CD8-positive, alpha-beta memory T cell (primary cell): ENCODE measurements at regions of chr1 and their contacts with region 1.

Region 1: GRCh38 chr1:168439456-168440375 is 104.1 kb downstream of the XCL2 start:
- DNase-seq: peak; percentile 67 to 89 (median 80)
- H3K4me3 ChIP-seq: peak overlapping the region; percentile 48
- H3K4me3 Mint-ChIP-seq: peak overlapping the region; percentile 44 to 93 (median 85)
- H3K27ac ChIP-seq: no peak overlapping the region
- H3K27ac Mint-ChIP-seq: peak overlapping the region; percentile 56 to 93 (median 88)
- H3K4me1 ChIP-seq: peaks cover 45% of the 10 kb centered on the region
- H3K4me1 Mint-ChIP-seq: peaks cover 58 to 65% (median 60%) of the 10 kb centered on the region in 3 donors
- H3K27me3 ChIP-seq: no peaks in the 10 kb centered on the region
- H3K27me3 Mint-ChIP-seq: peaks cover 0 to 1% of the 10 kb centered on the region in 2 donors

Region 2: GRCh38 chr1:168365719-168366479 is 73.8 kb before region 1 on chr1:
- CTCF ChIA-PET with region 1: interaction called, 11 read pairs
- POLR2A ChIA-PET with region 1: no interaction called
- DNase-seq: no peak
- H3K4me3 ChIP-seq: no peak overlapping the region
- H3K4me3 Mint-ChIP-seq: no peak overlapping the region
- H3K27ac ChIP-seq: no peak overlapping the region
- H3K27ac Mint-ChIP-seq: peak overlapping the region in 1 of 8 donors; percentile 7
- H3K4me1 ChIP-seq: peaks cover 27% of the 10 kb centered on the region
- H3K4me1 Mint-ChIP-seq: peaks cover 40 to 47% (median 45%) of the 10 kb centered on the region in 3 donors
- H3K27me3 ChIP-seq: no peaks in the 10 kb centered on the region
- H3K27me3 Mint-ChIP-seq: no peaks in the 10 kb centered on the region

Region 3: DNA sequence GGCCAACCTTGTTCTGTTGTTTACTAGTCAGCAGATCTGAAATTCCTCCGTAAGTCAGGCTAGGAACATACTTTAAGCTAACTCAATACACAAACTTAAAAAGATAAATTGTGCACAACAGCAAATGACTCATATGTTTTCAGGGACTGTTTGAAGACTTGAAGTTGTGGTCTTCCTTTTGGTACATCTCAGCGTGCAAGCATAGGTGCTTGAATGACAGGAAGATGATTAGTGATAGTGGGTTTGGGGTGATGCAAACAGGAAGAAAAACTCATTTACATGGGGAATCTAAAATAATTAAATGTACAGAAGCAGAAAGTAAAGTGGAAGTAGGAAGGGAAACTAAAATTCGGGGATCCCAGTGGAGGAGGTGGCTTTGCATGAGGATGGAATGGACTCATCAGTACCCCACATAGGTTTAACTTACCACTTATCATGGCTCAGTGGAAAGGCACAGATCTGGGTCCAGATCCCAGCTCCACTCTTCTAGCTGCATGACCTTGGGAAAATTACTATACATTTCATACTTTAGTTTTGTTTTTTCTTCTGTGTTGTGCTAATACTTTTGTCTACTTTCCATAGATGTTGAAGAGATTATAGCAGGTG is 18.2 kb before region 1 on chr1:
- CTCF ChIA-PET with region 1: interaction called, 18 read pairs
- POLR2A ChIA-PET with region 1: interaction called, 3 read pairs
- DNase-seq: peak in 3 of 5 donors; percentile 14 to 61 (median 59)
- H3K4me3 ChIP-seq: no peak overlapping the region
- H3K4me3 Mint-ChIP-seq: peak overlapping the region; percentile 2 to 71 (median 54)
- H3K27ac ChIP-seq: peak overlapping the region; percentile 8
- H3K27ac Mint-ChIP-seq: peak overlapping the region in 7 of 8 donors; percentile 14 to 90 (median 79)
- H3K4me1 ChIP-seq: peaks cover 28% of the 10 kb centered on the region
- H3K4me1 Mint-ChIP-seq: peaks cover 41 to 49% (median 42%) of the 10 kb centered on the region in 3 donors
- H3K27me3 ChIP-seq: no peaks in the 10 kb centered on the region
- H3K27me3 Mint-ChIP-seq: no peaks in the 10 kb centered on the region

Region 4: GRCh38 chr1:168427051-168427450 is 12.7 kb before region 1 on chr1:
- CTCF ChIA-PET with region 1: interaction called, 18 read pairs
- POLR2A ChIA-PET with region 1: interaction called, 3 read pairs
- DNase-seq: no peak
- H3K4me3 ChIP-seq: no peak overlapping the region
- H3K4me3 Mint-ChIP-seq: no peak overlapping the region
- H3K27ac ChIP-seq: no peak overlapping the region
- H3K27ac Mint-ChIP-seq: no peak overlapping the region
- H3K4me1 ChIP-seq: peaks cover 7% of the 10 kb centered on the region
- H3K4me1 Mint-ChIP-seq: peaks cover 15 to 21% (median 20%) of the 10 kb centered on the region in 3 donors
- H3K27me3 ChIP-seq: no peaks in the 10 kb centered on the region
- H3K27me3 Mint-ChIP-seq: no peaks in the 10 kb centered on the region

Region 5: GRCh38 chr1:168488138-168488537 is 48.4 kb after region 1 on chr1:
- CTCF ChIA-PET with region 1: no interaction called
- POLR2A ChIA-PET with region 1: no interaction called
- DNase-seq: no peak
- H3K4me3 ChIP-seq: no peak overlapping the region
- H3K4me3 Mint-ChIP-seq: no peak overlapping the region
- H3K27ac ChIP-seq: no peak overlapping the region
- H3K27ac Mint-ChIP-seq: peak overlapping the region in 2 of 8 donors; percentile 46 to 49
- H3K4me1 ChIP-seq: peaks cover 19% of the 10 kb centered on the region
- H3K4me1 Mint-ChIP-seq: peaks cover 51 to 60% (median 53%) of the 10 kb centered on the region in 3 donors
- H3K27me3 ChIP-seq: no peaks in the 10 kb centered on the region
- H3K27me3 Mint-ChIP-seq: peaks cover 0 to 1% of the 10 kb centered on the region in 2 donors

Region 6: GRCh38 chr1:168585191-168585590 is 145.5 kb after region 1 on chr1:
- CTCF ChIA-PET with region 1: interaction called, 18 read pairs
- POLR2A ChIA-PET with region 1: no interaction called
- DNase-seq: no peak
- H3K4me3 ChIP-seq: no peak overlapping the region
- H3K4me3 Mint-ChIP-seq: no peak overlapping the region
- H3K27ac ChIP-seq: no peak overlapping the region
- H3K27ac Mint-ChIP-seq: peak overlapping the region in 1 of 8 donors; percentile 43
- H3K4me1 ChIP-seq: no peaks in the 10 kb centered on the region
- H3K4me1 Mint-ChIP-seq: peaks cover 0 to 6% (median 4%) of the 10 kb centered on the region in 3 donors
- H3K27me3 ChIP-seq: no peaks in the 10 kb centered on the region
- H3K27me3 Mint-ChIP-seq: no peaks in the 10 kb centered on the region

Region 7: DNA sequence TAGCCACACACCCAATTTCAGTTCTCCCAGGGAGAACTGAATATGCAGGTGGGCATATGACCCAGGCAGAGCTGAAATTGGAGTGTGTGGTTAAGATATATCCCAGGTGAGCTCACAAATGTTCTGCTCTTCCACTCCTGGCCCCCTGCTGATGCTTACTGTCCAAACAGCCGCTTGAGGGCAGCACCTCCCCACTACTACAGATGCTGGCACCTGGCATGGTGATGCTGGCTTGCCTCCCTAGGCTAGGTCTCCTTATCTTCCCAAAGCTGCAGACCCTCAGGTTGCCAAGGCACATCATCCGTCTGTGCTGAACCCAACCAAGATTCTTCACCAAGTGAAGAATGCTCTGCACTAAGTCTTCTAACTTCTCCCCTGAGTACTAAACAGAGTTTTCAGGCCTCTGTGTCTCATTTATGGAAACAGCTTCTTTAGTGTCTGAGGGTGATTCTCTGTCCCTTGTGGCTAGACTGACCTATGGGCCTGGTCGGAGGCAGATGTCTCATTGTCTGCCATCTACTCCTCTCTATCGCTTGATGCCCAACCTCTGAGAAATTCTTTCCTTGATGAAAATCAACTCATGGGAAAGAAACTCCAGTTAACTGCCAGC is 163.9 kb after region 1 on chr1:
- CTCF ChIA-PET with region 1: interaction called, 46 read pairs
- POLR2A ChIA-PET with region 1: interaction called, 4 read pairs
- DNase-seq: peak; percentile 53 to 77 (median 54)
- H3K4me3 ChIP-seq: no peak overlapping the region
- H3K4me3 Mint-ChIP-seq: no peak overlapping the region
- H3K27ac ChIP-seq: no peak overlapping the region
- H3K27ac Mint-ChIP-seq: peak overlapping the region in 1 of 8 donors; percentile 22
- H3K4me1 ChIP-seq: no peaks in the 10 kb centered on the region
- H3K4me1 Mint-ChIP-seq: peaks cover 0 to 4% (median 0%) of the 10 kb centered on the region in 3 donors
- H3K27me3 ChIP-seq: no peaks in the 10 kb centered on the region
- H3K27me3 Mint-ChIP-seq: peaks cover 0 to 3% of the 10 kb centered on the region in 2 donors

Region 8: DNA sequence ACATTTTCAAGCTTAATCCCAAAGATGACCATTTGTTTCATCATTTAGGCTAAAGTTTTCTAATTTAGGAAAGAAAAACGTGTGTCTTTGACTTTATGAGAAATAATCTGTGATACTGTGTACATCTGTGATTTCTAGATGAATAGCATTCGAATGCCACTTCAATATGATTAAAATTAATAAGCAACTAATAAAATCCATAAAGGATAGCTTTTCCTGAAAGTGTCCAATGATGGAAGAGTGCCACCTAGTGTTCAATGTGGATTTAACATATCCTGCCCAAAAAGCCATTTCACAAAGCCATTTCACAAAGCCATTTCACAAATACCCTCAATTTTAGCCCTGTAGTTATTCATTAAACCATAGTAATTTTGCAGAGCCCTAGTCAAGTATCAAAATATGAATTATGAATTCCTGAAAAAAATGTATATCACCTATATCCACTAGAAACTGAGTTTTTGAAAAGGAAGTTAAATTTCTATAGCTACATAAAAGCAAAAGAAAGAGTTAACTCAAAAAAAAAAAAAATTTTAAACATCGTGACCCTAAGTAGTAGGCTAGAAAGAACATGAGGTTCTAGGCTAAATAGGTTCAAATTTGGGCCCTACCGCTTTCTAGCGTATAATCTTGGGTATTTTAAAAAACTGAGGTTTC is 908.8 kb after region 1 on chr1:
- CTCF ChIA-PET with region 1: interaction called, 20 read pairs
- POLR2A ChIA-PET with region 1: no interaction called
- DNase-seq: peak in 4 of 5 donors; percentile 6 to 50 (median 42)
- H3K4me3 ChIP-seq: no peak overlapping the region
- H3K4me3 Mint-ChIP-seq: no peak overlapping the region
- H3K27ac ChIP-seq: no peak overlapping the region
- H3K27ac Mint-ChIP-seq: no peak overlapping the region
- H3K4me1 ChIP-seq: no peaks in the 10 kb centered on the region
- H3K4me1 Mint-ChIP-seq: peaks cover 1 to 18% (median 8%) of the 10 kb centered on the region in 3 donors
- H3K27me3 ChIP-seq: no peaks in the 10 kb centered on the region
- H3K27me3 Mint-ChIP-seq: no peaks in the 10 kb centered on the region